Heart right ventricle (tissue), 16 donors: ENCODE measurements at regions of chr3 and their contacts with region 1.

Region 1: GRCh38 chr3:154522036-154522602 is 92.1 kb upstream of the GPR149 start:
- DNase-seq: no peak
- ATAC-seq: no peak
- H3K4me3 ChIP-seq: no peak overlapping the region
- H3K27ac ChIP-seq: no peak overlapping the region
- H3K4me1 ChIP-seq: no peaks in the 10 kb centered on the region
- H3K27me3 ChIP-seq: no peaks in the 10 kb centered on the region
- CTCF ChIP-seq: no peak

Region 2: GRCh38 chr3:154480033-154480432 is 42.1 kb before region 1 on chr3:
- intact Hi-C with region 1: no loop called
- DNase-seq: no peak
- ATAC-seq: no peak
- H3K4me3 ChIP-seq: no peak overlapping the region
- H3K27ac ChIP-seq: no peak overlapping the region
- H3K4me1 ChIP-seq: no peaks in the 10 kb centered on the region
- H3K27me3 ChIP-seq: no peaks in the 10 kb centered on the region
- CTCF ChIP-seq: no peak

Region 3: DNA sequence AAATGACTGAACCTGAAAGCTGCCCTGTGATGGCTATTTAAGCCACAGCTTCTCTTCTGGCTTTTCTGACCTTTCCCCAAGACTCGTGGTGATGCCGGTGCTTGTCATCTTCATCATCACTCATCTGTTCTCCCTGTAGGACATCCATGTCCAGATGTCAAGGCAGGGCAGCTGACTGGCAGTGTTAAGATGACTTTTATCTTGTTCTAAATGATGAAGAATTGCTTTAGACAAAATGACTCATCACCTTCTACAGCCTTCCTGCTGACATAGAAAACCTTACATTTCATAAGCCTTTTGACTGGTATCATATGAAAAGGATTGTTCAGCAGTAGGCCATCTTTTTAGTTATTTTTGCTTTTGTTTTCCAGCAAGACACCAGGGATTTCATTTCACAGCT is 25.1 kb before region 1 on chr3:
- intact Hi-C with region 1: loop called in 1 of 10 experiments (anchors 1 kb)
- DNase-seq: no peak
- ATAC-seq: no peak
- H3K4me3 ChIP-seq: no peak overlapping the region
- H3K27ac ChIP-seq: no peak overlapping the region
- H3K4me1 ChIP-seq: no peaks in the 10 kb centered on the region
- H3K27me3 ChIP-seq: no peaks in the 10 kb centered on the region
- CTCF ChIP-seq: no peak